ENCODE measurements at regions of chr15 and their contacts with region 1.

Region 1: GRCh38 chr15:41416742-41417406 is at the start of gene RTF1:
- DNase-seq: peak; percentile 88 to 91 (median 89)
- H3K4me3 ChIP-seq: peak within 1 kb of the TSS; percentile 74 to 98 (median 91)
- H3K4me3 Mint-ChIP-seq: peak within 1 kb of the TSS; percentile 99 to 100
- H3K27ac ChIP-seq: peak within 1 kb of the TSS; percentile 81 to 93
- H3K27ac Mint-ChIP-seq: peak within 1 kb of the TSS; percentile 92 to 97 (median 96)
- H3K4me1 ChIP-seq: peaks cover 20 to 34% of the 10 kb centered on the region in 2 donors
- H3K4me1 Mint-ChIP-seq: peaks cover 30% of the 10 kb centered on the region
- H3K27me3 ChIP-seq: no peaks in the 10 kb centered on the region
- H3K27me3 Mint-ChIP-seq: peaks cover 0 to 2% (median 0%) of the 10 kb centered on the region in 3 donors
- CTCF ChIP-seq: no peak
- polyA plus RNA-seq, gene RTF1: 11.2 to 19.1 (median 15.0) TPM

Region 2: DNA sequence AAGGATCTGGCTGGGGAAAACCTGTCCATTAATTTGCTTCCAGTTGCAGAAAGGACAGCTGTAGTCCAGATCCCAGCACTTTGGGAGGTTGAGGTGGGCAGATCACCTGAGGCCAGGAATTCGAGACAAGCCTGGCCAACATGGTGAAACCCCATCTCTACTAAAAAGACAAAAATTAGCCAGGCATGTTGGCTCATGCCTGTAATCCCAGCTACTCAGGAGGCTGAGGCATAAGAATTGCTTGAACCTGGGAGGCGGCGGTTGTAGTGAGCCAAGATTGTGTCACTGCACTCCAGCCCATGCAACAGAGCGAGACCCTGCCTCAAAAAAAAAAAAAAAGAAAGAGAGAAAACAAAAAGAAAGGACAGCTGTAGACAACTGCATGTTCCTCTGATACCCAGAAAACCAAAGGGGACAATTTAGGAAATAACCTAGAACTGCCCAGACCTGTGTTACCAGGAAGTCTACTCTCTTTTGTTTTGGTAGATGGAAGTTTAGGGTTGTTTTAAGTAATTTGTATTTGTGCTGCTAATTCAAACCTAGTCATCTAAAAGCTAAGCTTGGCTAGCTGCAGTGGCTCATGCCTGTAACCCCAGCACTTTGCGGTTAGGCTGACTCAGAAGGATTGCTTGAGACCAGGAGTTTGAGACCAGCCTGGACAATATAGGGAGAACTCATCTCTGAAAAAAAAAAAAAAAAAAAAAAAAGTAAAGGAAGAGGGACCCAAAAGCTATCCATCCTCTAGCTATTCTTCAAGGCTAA is 209.0 kb before region 1 on chr15:
- intact Hi-C with region 1: no loop called
- DNase-seq: no peak
- H3K4me3 ChIP-seq: no peak overlapping the region
- H3K4me3 Mint-ChIP-seq: no peak overlapping the region
- H3K27ac ChIP-seq: no peak overlapping the region
- H3K27ac Mint-ChIP-seq: no peak overlapping the region
- H3K4me1 ChIP-seq: no peaks in the 10 kb centered on the region
- H3K4me1 Mint-ChIP-seq: no peaks in the 10 kb centered on the region
- H3K27me3 ChIP-seq: no peaks in the 10 kb centered on the region
- H3K27me3 Mint-ChIP-seq: peaks cover 2 to 6% (median 3%) of the 10 kb centered on the region in 3 donors
- CTCF ChIP-seq: no peak

Region 3: GRCh38 chr15:41283653-41284426 is 133.0 kb before region 1 on chr15:
- intact Hi-C with region 1: loop called (anchors 10 kb)
- DNase-seq: peak; percentile 98 to 99 (median 99)
- H3K4me3 ChIP-seq: peak overlapping the region; percentile 64 to 91 (median 84)
- H3K4me3 Mint-ChIP-seq: peak overlapping the region; percentile 92 to 93
- H3K27ac ChIP-seq: peak overlapping the region; percentile 76 to 91
- H3K27ac Mint-ChIP-seq: peak overlapping the region; percentile 93 to 99 (median 95)
- H3K4me1 ChIP-seq: peaks cover 30 to 38% of the 10 kb centered on the region in 2 donors
- H3K4me1 Mint-ChIP-seq: peaks cover 37% of the 10 kb centered on the region
- H3K27me3 ChIP-seq: no peaks in the 10 kb centered on the region
- H3K27me3 Mint-ChIP-seq: peaks cover 0 to 2% (median 0%) of the 10 kb centered on the region in 3 donors
- CTCF ChIP-seq: no peak

Measured in CD14-positive monocyte (primary cell).